ENCODE measurements at regions of chr15 and their contacts with region 1.

Region 1: GRCh38 chr15:66700802-66701421 is 1.1 kb upstream of the SMAD6 start:
- DNase-seq: peak; percentile 96 to 97 (median 97)
- ATAC-seq: peak; percentile 62 to 82 (median 78)
- H3K4me3 ChIP-seq: peak overlapping the region; percentile 50 to 90 (median 74)
- H3K27ac ChIP-seq: peak overlapping the region; percentile 45 to 95 (median 90)
- H3K4me1 ChIP-seq: peaks cover 0 to 47% (median 26%) of the 10 kb centered on the region in 12 donors
- H3K27me3 ChIP-seq: peaks cover 0 to 27% (median 0%) of the 10 kb centered on the region in 9 donors
- CTCF ChIP-seq: no peak
- POLR2A ChIP-seq: peak in 1 of 2 donors; percentile 48

Region 2: DNA sequence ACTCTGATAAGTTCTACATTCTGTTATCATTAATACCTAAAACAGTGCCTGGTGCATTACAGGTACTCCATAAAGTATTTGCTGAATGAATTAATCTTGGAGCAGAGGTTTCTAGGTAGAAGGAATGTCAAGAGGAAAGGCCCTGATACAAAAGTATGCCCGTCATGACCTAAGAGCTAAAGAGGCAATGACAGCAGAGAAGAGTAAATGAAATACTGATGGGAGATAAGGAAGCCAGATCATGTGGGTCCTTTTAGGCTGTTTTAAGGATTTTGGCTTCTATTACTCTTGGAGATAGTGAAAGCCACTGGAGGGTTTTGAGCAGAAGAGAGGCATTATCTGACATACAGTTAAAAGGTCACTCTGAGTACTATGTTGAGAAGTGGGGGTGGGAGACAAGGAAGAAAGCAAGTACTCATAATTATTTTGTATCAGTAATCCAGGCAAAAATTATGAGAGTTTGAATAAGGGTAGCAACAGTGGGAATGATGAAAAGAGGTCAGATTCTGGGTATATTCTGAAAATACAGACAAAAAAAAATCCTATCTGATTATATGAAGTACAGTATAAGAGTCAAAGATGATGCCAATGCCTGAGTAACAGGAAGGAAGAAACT is 957.2 kb before region 1 on chr15:
- intact Hi-C with region 1: no loop called
- DNase-seq: no peak
- ATAC-seq: no peak
- H3K4me3 ChIP-seq: no peak overlapping the region
- H3K27ac ChIP-seq: no peak overlapping the region
- H3K4me1 ChIP-seq: peaks cover 0 to 7% (median 0%) of the 10 kb centered on the region in 12 donors
- H3K27me3 ChIP-seq: no peaks in the 10 kb centered on the region
- CTCF ChIP-seq: no peak
- POLR2A ChIP-seq: no peak

Region 3: GRCh38 chr15:66619151-66619903 is 81.6 kb before region 1 on chr15:
- intact Hi-C with region 1: loop called (anchors 1 to 5 kb)
- DNase-seq: peak; percentile 73 to 85 (median 77)
- ATAC-seq: peak; percentile 53 to 75 (median 72)
- H3K4me3 ChIP-seq: no peak overlapping the region
- H3K27ac ChIP-seq: peak overlapping the region in 11 of 12 donors; percentile 1 to 87 (median 70)
- H3K4me1 ChIP-seq: peaks cover 0 to 66% (median 38%) of the 10 kb centered on the region in 12 donors
- H3K27me3 ChIP-seq: peaks cover 0 to 10% (median 0%) of the 10 kb centered on the region in 9 donors
- CTCF ChIP-seq: peak; percentile 81 to 96 (median 92)
- POLR2A ChIP-seq: no peak

Region 4: GRCh38 chr15:66740802-66741201 is 39.9 kb after region 1 on chr15:
- intact Hi-C with region 1: loop called in 2 of 10 experiments (anchors 2 to 5 kb)
- DNase-seq: peak in 1 of 5 donors; percentile 43
- ATAC-seq: peak in 1 of 4 donors; percentile 35
- H3K4me3 ChIP-seq: no peak overlapping the region
- H3K27ac ChIP-seq: peak overlapping the region in 1 of 12 donors; percentile 28
- H3K4me1 ChIP-seq: peaks cover 0 to 75% (median 37%) of the 10 kb centered on the region in 12 donors
- H3K27me3 ChIP-seq: no peaks in the 10 kb centered on the region
- CTCF ChIP-seq: no peak
- POLR2A ChIP-seq: no peak

Region 5: DNA sequence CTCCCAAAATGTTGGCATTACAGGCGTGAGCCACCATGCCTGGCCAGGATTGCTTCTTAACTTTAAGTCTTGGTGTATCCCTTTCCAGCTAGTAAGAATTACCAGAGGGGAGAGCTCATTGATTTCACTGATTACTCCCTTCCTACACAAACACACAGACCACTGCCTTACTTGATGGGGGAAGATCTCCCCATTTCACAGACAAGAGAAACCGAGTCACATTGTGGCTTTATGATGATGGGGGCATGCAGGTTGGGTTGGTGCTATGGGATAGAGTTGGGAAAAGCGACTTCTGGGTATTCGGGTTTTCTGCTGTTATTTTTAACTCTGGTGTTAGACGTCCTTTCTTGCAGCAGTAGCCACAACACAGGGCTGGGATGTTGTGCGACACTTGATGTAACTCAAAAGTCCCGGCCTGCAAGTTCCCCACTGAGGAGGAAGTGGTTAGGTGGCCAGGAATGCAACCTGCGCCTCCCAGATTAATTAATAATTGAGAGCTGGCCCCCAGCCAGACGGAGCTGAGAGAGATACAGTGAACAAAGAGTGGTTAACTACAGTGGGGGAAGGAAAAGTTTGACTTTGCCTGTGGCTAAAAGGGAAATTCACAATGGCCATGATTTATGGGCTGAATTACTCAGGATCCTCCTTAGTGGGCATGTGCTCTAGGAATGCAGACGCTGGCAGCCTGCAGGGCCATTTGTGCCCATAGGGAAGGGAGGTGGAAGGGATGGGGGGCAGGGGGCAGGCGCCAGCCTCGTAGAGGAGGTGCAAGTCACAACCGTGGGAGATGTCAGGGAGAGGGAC is 64.8 kb after region 1 on chr15:
- intact Hi-C with region 1: loop called in 7 of 10 experiments (anchors 2 to 5 kb)
- DNase-seq: peak in 3 of 5 donors; percentile 43 to 56 (median 45)
- ATAC-seq: no peak
- H3K4me3 ChIP-seq: no peak overlapping the region
- H3K27ac ChIP-seq: peak overlapping the region in 8 of 12 donors; percentile 16 to 94 (median 50)
- H3K4me1 ChIP-seq: peaks cover 13 to 79% (median 63%) of the 10 kb centered on the region in 12 donors
- H3K27me3 ChIP-seq: peaks cover 0 to 5% (median 0%) of the 10 kb centered on the region in 9 donors
- CTCF ChIP-seq: no peak
- POLR2A ChIP-seq: no peak

Region 6: DNA sequence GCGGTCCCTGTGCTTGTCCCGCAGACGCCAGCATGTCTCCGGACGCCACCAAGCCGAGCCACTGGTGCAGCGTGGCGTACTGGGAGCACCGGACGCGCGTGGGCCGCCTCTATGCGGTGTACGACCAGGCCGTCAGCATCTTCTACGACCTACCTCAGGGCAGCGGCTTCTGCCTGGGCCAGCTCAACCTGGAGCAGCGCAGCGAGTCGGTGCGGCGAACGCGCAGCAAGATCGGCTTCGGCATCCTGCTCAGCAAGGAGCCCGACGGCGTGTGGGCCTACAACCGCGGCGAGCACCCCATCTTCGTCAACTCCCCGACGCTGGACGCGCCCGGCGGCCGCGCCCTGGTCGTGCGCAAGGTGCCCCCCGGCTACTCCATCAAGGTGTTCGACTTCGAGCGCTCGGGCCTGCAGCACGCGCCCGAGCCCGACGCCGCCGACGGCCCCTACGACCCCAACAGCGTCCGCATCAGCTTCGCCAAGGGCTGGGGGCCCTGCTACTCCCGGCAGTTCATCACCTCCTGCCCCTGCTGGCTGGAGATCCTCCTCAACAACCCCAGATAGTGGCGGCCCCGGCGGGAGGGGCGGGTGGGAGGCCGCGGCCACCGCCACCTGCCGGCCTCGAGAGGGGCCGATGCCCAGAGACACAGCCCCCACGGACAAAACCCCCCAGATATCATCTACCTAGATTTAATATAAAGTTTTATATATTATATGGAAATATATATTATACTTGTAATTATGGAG is 80.2 kb after region 1 on chr15:
- intact Hi-C with region 1: no loop called
- DNase-seq: peak in 1 of 5 donors; percentile 24
- ATAC-seq: no peak
- H3K4me3 ChIP-seq: no peak overlapping the region
- H3K27ac ChIP-seq: no peak overlapping the region
- H3K4me1 ChIP-seq: peaks cover 0 to 42% (median 6%) of the 10 kb centered on the region in 12 donors
- H3K27me3 ChIP-seq: no peaks in the 10 kb centered on the region
- CTCF ChIP-seq: no peak
- POLR2A ChIP-seq: no peak

Region 7: DNA sequence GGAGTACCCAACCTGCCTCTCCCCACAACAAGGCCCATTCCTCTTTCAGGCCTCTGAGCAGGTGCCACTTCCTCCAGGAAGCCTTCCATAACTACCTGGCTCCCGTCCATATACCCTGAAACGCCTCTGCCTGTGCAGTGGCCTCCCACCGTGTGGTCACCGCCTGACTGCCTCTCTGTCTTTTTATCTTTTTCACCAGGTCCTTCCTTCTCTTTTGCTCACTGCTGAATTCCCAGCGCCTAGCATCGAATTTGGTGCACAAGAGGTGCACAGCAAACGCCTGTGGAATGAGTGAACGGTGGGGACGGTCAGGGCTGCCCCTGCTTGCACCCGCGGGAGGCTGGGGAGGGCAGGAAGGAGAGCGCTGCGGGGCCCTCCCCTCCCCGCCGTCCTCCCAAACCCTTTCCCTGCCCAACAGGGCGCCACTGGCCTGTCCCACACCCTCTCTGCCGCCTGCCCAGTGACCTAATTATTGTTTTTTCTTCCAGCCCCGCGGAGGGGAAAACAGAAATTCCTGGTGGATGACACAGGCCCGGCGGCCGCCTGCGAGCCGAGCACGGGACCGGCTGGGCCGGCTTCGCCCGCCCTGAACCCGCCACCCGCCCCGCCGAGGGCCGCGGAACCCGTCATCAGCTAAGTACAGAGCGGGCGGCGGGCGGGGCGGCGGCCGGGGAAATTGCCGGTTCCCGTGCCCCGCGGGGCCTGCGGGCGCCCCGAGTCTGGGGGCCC is 141.2 kb after region 1 on chr15:
- intact Hi-C with region 1: loop called in 1 of 10 experiments (anchors 5 kb)
- DNase-seq: peak; percentile 87 to 92 (median 92)
- ATAC-seq: peak; percentile 81 to 92 (median 89)
- H3K4me3 ChIP-seq: peak overlapping the region; percentile 14 to 76 (median 57)
- H3K27ac ChIP-seq: peak overlapping the region; percentile 90 to 99 (median 96)
- H3K4me1 ChIP-seq: peaks cover 0 to 49% (median 32%) of the 10 kb centered on the region in 12 donors
- H3K27me3 ChIP-seq: no peaks in the 10 kb centered on the region
- CTCF ChIP-seq: no peak
- POLR2A ChIP-seq: peak in 1 of 2 donors; percentile 36

Measured in heart left ventricle (tissue), 16 donors.